Prostate gland (tissue), 2 donors: ENCODE measurements at regions of chr21 and their contacts with region 1.

Region 1: DNA sequence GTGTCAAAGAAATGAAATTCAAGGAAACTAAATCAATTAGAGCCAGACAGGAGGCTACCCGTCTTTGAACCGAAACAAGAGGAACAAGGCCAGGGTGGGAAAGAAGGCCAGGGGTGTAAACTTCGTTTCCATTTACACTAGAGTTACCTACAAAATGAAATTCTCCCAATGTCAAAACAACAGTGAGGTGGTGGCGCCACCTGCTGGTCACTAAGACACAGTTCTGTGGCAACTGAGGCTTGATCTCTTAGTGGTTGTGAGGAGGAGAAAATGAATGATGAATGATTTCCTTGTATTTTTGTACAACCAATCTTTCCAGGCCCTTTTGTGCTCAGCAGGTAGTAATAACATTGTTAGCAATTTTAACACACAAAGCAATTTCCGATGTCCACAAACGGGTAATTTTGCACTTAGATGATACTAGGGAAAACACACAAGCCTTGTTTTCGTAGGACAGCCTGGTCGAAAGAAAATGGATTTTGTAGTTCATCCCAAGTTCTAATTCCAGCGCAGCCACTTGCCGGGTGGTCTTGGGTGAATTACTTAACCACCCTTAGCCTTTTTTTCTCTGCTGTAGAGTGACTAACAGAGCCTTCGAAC is 54.8 kb upstream of the SOD1 start:
- DNase-seq: peak; percentile 52
- H3K4me3 ChIP-seq: no peak overlapping the region
- H3K27ac ChIP-seq: no peak overlapping the region
- H3K4me1 ChIP-seq: no peaks in the 10 kb centered on the region
- H3K27me3 ChIP-seq: no peaks in the 10 kb centered on the region
- CTCF ChIP-seq: peak; percentile 77 to 91 (median 80)
- POLR2A ChIP-seq: no peak

Region 2: DNA sequence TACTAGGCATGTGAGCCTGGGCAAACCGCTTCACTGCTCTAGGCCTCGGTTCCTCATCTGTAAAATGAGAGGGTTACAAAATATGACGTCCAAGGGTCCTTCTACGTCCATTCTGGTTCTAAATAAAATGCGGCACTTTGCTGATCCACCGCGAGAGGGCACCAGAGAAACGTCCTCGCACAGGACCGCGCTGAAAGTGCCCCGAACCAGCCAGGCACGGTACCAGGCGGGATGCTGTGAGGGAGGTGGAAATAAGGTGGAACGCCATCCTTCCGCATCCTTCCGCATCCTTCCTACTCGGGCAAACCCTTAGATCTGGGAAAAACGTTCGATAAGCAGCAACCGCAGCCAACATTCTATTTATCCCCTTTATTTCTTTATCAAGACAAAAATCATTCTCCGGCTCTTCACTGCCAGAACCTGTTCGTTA is 506.1 kb before region 1 on chr21:
- intact Hi-C with region 1: loop called (anchors 10 kb)
- DNase-seq: peak; percentile 24
- H3K4me3 ChIP-seq: no peak overlapping the region
- H3K27ac ChIP-seq: no peak overlapping the region
- H3K4me1 ChIP-seq: no peaks in the 10 kb centered on the region
- H3K27me3 ChIP-seq: no peaks in the 10 kb centered on the region
- CTCF ChIP-seq: peak; percentile 37 to 76 (median 67)
- POLR2A ChIP-seq: no peak

Region 3: DNA sequence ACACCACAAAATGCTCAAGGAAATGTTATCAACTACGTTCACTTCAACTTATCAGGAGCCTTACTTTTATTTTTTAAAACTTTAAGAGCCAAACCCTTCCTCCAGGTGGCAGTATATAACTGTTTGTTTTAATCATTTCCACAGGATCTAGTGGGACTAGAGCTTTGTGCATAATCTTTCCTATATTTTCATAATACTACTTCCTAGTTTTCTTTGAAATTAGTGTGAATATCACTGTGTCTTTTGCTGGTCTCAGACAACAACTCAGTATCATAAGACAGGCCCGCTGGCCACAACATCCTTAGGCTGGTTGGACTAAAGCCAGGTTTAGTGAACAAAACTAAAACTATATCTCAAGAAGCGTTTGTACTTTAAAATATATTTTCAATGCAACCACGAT is 406.1 kb before region 1 on chr21:
- intact Hi-C with region 1: loop called (anchors 5 kb)
- DNase-seq: peak; percentile 23
- H3K4me3 ChIP-seq: no peak overlapping the region
- H3K27ac ChIP-seq: no peak overlapping the region
- H3K4me1 ChIP-seq: no peaks in the 10 kb centered on the region
- H3K27me3 ChIP-seq: no peaks in the 10 kb centered on the region
- CTCF ChIP-seq: peak in 3 of 4 experiments; percentile 68 to 80 (median 75)
- POLR2A ChIP-seq: no peak

Region 4: GRCh38 chr21:31798842-31799704 is 194.4 kb after region 1 on chr21:
- intact Hi-C with region 1: no loop called
- DNase-seq: no peak
- H3K4me3 ChIP-seq: no peak overlapping the region
- H3K27ac ChIP-seq: no peak overlapping the region
- H3K4me1 ChIP-seq: no peaks in the 10 kb centered on the region
- H3K27me3 ChIP-seq: no peaks in the 10 kb centered on the region
- CTCF ChIP-seq: no peak
- POLR2A ChIP-seq: no peak